ENCODE measurements at regions of chr4 and their contacts with region 1.

Region 1: DNA sequence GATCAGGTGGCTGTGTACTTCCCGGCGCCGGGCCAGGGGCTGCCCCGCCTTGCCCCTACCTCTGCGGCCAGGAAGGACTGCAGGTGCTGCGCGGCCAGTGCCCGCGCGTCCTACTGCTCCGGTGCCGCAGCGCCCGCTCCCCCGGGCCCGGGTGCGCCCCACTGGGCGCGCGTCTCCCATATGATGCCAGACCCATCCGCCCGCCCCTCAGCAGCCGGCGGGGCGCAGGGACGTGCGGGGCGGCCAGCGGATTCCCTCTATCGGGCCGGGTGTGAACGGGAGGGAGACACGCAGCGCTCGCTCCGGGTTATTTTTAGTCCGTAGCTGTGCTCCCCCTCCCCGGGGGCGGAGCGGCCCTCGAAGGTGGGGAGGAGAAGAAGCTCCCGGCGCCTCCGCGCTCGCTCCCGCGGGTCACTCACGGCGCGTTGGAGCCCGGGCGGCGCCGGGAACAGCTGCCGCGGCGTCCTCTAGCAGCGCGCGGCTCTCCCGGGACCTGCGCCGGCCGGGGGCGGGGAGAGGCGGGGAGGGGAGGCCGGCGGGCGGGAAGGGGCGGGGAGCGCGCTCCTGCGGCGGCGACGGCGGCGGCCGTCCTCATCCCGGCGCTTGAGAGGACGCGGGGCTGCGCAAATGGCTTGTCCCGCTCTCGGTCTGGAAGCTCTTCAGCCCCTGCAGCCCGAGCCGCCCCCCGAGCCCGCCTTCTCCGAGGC is 103.6 kb downstream of the UCHL1 start:
- DNase-seq: peak; percentile 81
- H3K4me3 ChIP-seq: peak overlapping the region; percentile 70 to 93 (median 86)
- H3K27ac ChIP-seq: peak overlapping the region; percentile 71 to 91 (median 82)
- H3K4me1 ChIP-seq: peaks cover 0 to 27% (median 10%) of the 10 kb centered on the region in 4 donors
- H3K27me3 ChIP-seq: no peaks in the 10 kb centered on the region
- CTCF ChIP-seq: no peak
- EP300 ChIP-seq: no peak
- POLR2A ChIP-seq: no peak

Region 2: DNA sequence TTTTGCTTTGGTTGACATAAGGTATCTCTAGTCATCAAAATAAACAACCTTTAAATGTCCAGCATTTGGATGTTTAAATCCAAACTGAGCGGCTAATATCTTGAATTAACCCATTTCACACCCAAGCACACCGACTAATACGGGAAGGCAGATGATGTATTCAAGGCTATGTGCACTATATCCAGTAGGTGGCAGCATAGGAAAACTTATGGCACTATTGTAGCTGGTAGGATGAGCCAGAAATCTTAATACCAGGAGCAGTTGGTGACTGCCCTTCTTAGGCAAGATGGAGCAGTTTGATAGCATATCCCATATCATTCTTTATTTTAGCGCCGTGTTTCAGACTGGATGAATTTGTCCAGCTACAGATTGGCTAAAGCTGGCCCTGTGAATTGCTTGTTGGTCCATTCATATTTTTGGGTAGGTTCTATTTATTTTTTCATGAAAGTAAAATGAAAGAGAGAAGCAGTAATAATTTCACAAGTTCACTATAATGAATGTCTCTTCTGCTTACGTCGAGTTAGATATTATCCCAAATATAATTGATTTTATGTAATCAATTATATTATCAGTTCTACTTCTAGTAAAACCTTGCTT is 79.2 kb before region 1 on chr4:
- intact Hi-C with region 1: loop called (anchors 5 kb)
- DNase-seq: peak; percentile 64
- H3K4me3 ChIP-seq: no peak overlapping the region
- H3K27ac ChIP-seq: no peak overlapping the region
- H3K4me1 ChIP-seq: no peaks in the 10 kb centered on the region
- H3K27me3 ChIP-seq: no peaks in the 10 kb centered on the region
- CTCF ChIP-seq: peak; percentile 75 to 94 (median 83)
- EP300 ChIP-seq: no peak
- POLR2A ChIP-seq: no peak

Region 3: GRCh38 chr4:41538017-41538733 is 177.8 kb after region 1 on chr4 and contains the start of gene LIMCH1:
- intact Hi-C with region 1: loop called (anchors 5 kb)
- DNase-seq: peak; percentile 83
- H3K4me3 ChIP-seq: peak within 1 kb of the TSS in 3 of 4 donors; percentile 8 to 22 (median 12)
- H3K27ac ChIP-seq: peak within 1 kb of the TSS; percentile 59 to 79 (median 76)
- H3K4me1 ChIP-seq: peaks cover 0 to 50% (median 35%) of the 10 kb centered on the region in 4 donors
- H3K27me3 ChIP-seq: no peaks in the 10 kb centered on the region
- CTCF ChIP-seq: no peak
- EP300 ChIP-seq: no peak
- POLR2A ChIP-seq: no peak
- total RNA-seq, gene LIMCH1: 6.7 to 26.0 (median 14.2) TPM

Region 4: GRCh38 chr4:41611881-41612871 is 251.8 kb after region 1 on chr4:
- intact Hi-C with region 1: loop called (anchors 5 kb)
- DNase-seq: peak; percentile 79
- H3K4me3 ChIP-seq: peak overlapping the region in 2 of 4 donors; percentile 41 to 42
- H3K27ac ChIP-seq: peak overlapping the region; percentile 69 to 86 (median 80)
- H3K4me1 ChIP-seq: peaks cover 0 to 51% (median 30%) of the 10 kb centered on the region in 4 donors
- H3K27me3 ChIP-seq: no peaks in the 10 kb centered on the region
- CTCF ChIP-seq: no peak
- EP300 ChIP-seq: no peak
- POLR2A ChIP-seq: no peak